MCF 10A (cell line): ENCODE measurements at regions of chr2 and their contacts with region 1.

Region 1: DNA sequence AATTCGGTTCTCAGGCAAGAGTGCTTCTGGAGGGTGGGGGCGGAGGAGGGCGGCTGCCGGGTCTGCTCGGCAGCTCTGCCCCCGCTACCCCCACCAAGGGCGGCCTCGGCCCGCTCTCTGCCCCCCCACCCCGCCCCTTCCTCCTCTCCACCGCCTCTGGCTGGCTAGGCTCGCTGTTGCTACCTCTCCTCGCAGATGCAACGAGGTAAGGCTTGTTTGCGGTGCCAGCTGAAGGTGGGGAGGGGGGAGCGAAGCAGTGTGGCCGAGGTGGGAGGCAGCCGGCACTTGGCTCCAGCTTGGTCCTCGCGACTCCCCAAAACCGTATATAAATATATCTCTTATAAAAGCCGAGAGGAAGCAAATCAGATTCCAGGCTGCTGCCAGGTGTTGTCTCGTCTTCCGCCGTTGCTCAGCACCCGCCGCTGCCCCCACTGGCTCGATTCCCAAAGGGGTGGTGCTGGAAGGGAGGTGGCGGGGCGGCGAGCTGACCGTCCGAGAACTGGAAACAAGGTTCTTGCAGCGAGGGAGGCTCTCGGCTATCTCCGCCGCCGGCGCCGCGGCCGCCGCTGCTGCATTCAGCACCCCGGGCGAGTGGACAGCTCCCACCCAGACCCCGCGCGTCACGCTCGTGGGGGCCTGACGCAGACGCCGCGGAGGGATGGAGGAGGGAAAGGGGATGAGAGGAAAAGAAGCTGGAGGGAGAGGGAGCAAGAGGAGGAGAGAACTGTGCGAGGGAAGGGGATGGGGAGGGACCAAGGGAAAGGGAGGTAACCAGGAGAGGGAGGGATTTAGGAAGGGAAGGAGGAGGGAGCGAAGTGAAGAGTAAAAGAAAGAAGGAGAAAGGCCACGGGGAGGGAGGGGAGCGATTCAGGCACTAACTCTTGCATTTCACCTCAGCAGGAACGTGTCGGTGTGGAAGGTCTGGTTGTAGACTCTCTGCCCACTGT is at the start of gene MARCHF4:
- DNase-seq: peak; percentile 60
- H3K4me3 Mint-ChIP-seq: peak within 1 kb of the TSS; percentile 49
- H3K27ac Mint-ChIP-seq: no peak within 1 kb of the TSS
- H3K4me1 Mint-ChIP-seq: peaks cover 26% of the 10 kb centered on the region
- H3K27me3 Mint-ChIP-seq: peaks cover 45% of the 10 kb centered on the region
- CTCF ChIP-seq: no peak
- total RNA-seq, gene MARCHF4: 0.17 and 0.33 TPM in 2 replicates

Region 2: GRCh38 chr2:216388046-216388884 is 16.2 kb after region 1 on chr2:
- CTCF ChIA-PET with region 1: no interaction called
- POLR2A ChIA-PET with region 1: no interaction called
- intact Hi-C with region 1: loop called (anchors 2 kb)
- DNase-seq: no peak
- H3K4me3 Mint-ChIP-seq: no peak overlapping the region
- H3K27ac Mint-ChIP-seq: no peak overlapping the region
- H3K4me1 Mint-ChIP-seq: no peaks in the 10 kb centered on the region
- H3K27me3 Mint-ChIP-seq: peaks cover 11% of the 10 kb centered on the region
- CTCF ChIP-seq: no peak

Region 3: GRCh38 chr2:216412022-216412999 is 40.3 kb after region 1 on chr2 and contains the start of gene SMARCAL1:
- CTCF ChIA-PET with region 1: interaction called, 3 read pairs
- POLR2A ChIA-PET with region 1: no interaction called
- intact Hi-C with region 1: loop called (anchors 2 kb)
- DNase-seq: peak; percentile 98
- H3K4me3 Mint-ChIP-seq: peak within 1 kb of the TSS; percentile 98
- H3K27ac Mint-ChIP-seq: peak within 1 kb of the TSS; percentile 91
- H3K4me1 Mint-ChIP-seq: no peaks in the 10 kb centered on the region
- H3K27me3 Mint-ChIP-seq: peaks cover 8% of the 10 kb centered on the region
- CTCF ChIP-seq: no peak
- total RNA-seq, gene SMARCAL1: 22.1 and 24.0 TPM in 2 replicates

Region 4: GRCh38 chr2:216478151-216478550 is 106.1 kb after region 1 on chr2:
- CTCF ChIA-PET with region 1: no interaction called
- POLR2A ChIA-PET with region 1: no interaction called
- intact Hi-C with region 1: no loop called
- DNase-seq: peak; percentile 92
- H3K4me3 Mint-ChIP-seq: no peak overlapping the region
- H3K27ac Mint-ChIP-seq: no peak overlapping the region
- H3K4me1 Mint-ChIP-seq: peaks cover 9% of the 10 kb centered on the region
- H3K27me3 Mint-ChIP-seq: no peaks in the 10 kb centered on the region
- CTCF ChIP-seq: no peak